Naive thymus-derived CD4-positive, alpha-beta T cell (primary cell): ENCODE measurements at regions of chr3 and their contacts with region 1.

Region 1: DNA sequence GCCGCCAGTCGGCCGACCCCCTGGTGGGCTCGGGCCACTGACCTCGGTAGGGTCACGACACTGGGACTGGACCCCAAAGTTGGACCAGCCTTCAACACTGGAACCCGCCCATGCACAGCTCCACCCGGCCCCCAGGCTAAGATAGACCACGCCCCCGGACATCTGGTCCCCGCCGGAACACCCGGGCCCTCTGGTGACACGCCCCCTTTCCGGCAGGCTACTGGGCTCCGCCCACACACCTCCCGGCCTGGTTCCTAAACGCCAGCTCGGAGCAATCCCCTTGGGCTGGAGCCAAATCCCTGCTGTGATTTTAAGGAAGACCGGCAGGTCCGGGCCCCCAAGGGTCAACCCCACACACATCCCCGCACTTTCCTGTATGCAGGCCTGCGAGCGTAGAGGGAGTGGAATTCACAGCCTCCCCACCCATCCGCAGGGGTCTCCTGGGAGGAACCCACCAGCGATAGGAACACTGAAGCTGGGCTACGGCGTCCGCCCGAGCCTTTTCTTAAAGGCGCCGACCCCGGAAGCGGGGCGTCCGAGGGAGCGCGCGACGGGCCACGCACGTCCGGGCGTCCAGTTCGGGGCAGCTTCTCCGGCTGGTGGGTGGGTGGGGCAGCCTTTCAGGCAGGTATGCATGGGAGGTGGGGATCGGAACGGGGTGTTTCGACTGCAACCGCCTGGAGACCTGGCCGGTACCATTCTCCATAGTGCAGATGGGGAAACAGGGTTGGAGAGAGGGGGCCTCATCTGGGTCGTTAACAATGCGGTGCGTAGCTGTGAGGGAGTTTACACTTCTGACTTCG is at the start of gene HEMK1:
- DNase-seq: peak; percentile 71 to 95 (median 90)
- ATAC-seq: peak; percentile 81
- H3K4me3 ChIP-seq: peak within 1 kb of the TSS; percentile 97
- H3K4me3 Mint-ChIP-seq: peak within 1 kb of the TSS; percentile 86 to 99 (median 96)
- H3K27ac ChIP-seq: peak within 1 kb of the TSS; percentile 84
- H3K27ac Mint-ChIP-seq: peak within 1 kb of the TSS; percentile 90 to 98 (median 93)
- H3K4me1 ChIP-seq: peaks cover 49 to 57% of the 10 kb centered on the region in 2 donors
- H3K4me1 Mint-ChIP-seq: peaks cover 37 to 75% (median 71%) of the 10 kb centered on the region in 7 donors
- H3K27me3 ChIP-seq: no peaks in the 10 kb centered on the region
- H3K27me3 Mint-ChIP-seq: no peaks in the 10 kb centered on the region
- total RNA-seq, gene HEMK1: 32.1 to 71.1 (median 66.1) TPM

Region 2: GRCh38 chr3:49673715-49674496 is 895.2 kb before region 1 on chr3 and contains the start of gene APEH:
- CTCF ChIA-PET with region 1: no interaction called
- POLR2A ChIA-PET with region 1: no interaction called
- intact Hi-C with region 1: loop called in 1 of 2 experiments (anchors 10 kb)
- DNase-seq: peak; percentile 94 to 99 (median 98)
- ATAC-seq: peak; percentile 93
- H3K4me3 ChIP-seq: peak within 1 kb of the TSS; percentile 79
- H3K4me3 Mint-ChIP-seq: peak within 1 kb of the TSS; percentile 90 to 97 (median 94)
- H3K27ac ChIP-seq: peak within 1 kb of the TSS; percentile 94
- H3K27ac Mint-ChIP-seq: peak within 1 kb of the TSS; percentile 93 to 99 (median 96)
- H3K4me1 ChIP-seq: peaks cover 16 to 31% of the 10 kb centered on the region in 2 donors
- H3K4me1 Mint-ChIP-seq: peaks cover 15 to 57% (median 38%) of the 10 kb centered on the region in 7 donors
- H3K27me3 ChIP-seq: no peaks in the 10 kb centered on the region
- H3K27me3 Mint-ChIP-seq: no peaks in the 10 kb centered on the region
- total RNA-seq, gene APEH: 75.5 to 151 (median 99.1) TPM

Region 3: GRCh38 chr3:50298836-50299637 is 270.1 kb before region 1 on chr3 and contains the starts of genes HYAL3 and NAA80:
- CTCF ChIA-PET with region 1: no interaction called
- POLR2A ChIA-PET with region 1: interaction called, 3 read pairs
- intact Hi-C with region 1: loop called (anchors 1 kb)
- DNase-seq: peak; percentile 94 to 100 (median 99)
- ATAC-seq: peak; percentile 93
- H3K4me3 ChIP-seq: peak within 1 kb of the TSS; percentile 97
- H3K4me3 Mint-ChIP-seq: peak within 1 kb of the TSS; percentile 84 to 99 (median 97)
- H3K27ac ChIP-seq: peak within 1 kb of the TSS; percentile 86
- H3K27ac Mint-ChIP-seq: peak within 1 kb of the TSS; percentile 90 to 100 (median 99)
- H3K4me1 ChIP-seq: peaks cover 19 to 20% of the 10 kb centered on the region in 2 donors
- H3K4me1 Mint-ChIP-seq: peaks cover 12 to 36% (median 22%) of the 10 kb centered on the region in 7 donors
- H3K27me3 ChIP-seq: no peaks in the 10 kb centered on the region
- H3K27me3 Mint-ChIP-seq: no peaks in the 10 kb centered on the region
- total RNA-seq, gene HYAL3: 3.4 to 10.7 (median 4.2) TPM
- total RNA-seq, gene NAA80: 30.2 to 44.9 (median 33.6) TPM

Region 4: GRCh38 chr3:50365080-50365841 is 203.9 kb before region 1 on chr3:
- CTCF ChIA-PET with region 1: no interaction called
- POLR2A ChIA-PET with region 1: interaction called, 7 read pairs
- intact Hi-C with region 1: loop called (anchors 1 kb)
- DNase-seq: peak; percentile 82 to 96 (median 94)
- ATAC-seq: peak; percentile 97
- H3K4me3 ChIP-seq: peak overlapping the region; percentile 99
- H3K4me3 Mint-ChIP-seq: peak overlapping the region; percentile 82 to 93 (median 90)
- H3K27ac ChIP-seq: peak overlapping the region; percentile 95
- H3K27ac Mint-ChIP-seq: peak overlapping the region; percentile 87 to 97 (median 94)
- H3K4me1 ChIP-seq: peaks cover 13 to 18% of the 10 kb centered on the region in 2 donors
- H3K4me1 Mint-ChIP-seq: peaks cover 8 to 36% (median 20%) of the 10 kb centered on the region in 7 donors
- H3K27me3 ChIP-seq: no peaks in the 10 kb centered on the region
- H3K27me3 Mint-ChIP-seq: no peaks in the 10 kb centered on the region

Region 5: DNA sequence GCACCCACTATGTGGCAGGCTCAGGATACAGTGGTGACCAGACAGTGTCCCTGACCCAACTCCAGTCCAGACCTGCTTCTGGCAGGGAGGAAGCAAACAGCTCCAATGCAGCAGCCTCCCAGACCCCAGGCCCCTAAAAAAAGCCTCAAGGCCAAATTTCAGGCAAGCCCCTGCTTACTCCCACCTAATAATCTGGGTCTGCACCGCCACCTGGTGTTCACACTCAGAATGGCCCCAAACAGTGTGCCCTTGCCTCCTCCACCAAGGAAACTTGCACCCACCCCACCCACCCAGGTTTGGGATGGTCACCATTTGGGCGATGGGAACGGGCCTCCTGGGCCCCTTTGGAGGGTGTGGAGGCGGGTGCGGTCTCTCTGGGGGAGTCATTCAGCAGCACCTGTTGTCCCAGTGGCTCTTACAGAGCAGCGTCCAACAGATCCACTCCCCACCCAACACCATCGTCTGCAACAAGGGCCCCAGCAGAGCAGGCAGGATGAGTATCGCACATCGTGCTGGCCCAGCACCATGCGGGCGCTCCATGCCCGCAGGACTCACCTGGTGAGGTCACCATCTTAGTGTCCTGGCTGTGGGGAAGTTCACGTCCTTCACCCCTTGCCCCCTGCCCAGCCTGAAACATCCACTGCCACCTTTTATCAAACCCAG is 18.9 kb before region 1 on chr3:
- CTCF ChIA-PET with region 1: interaction called, 3 read pairs
- POLR2A ChIA-PET with region 1: interaction called, 6 read pairs
- intact Hi-C with region 1: loop called in 1 of 2 experiments (anchors 2 kb)
- DNase-seq: peak; percentile 25 to 63 (median 45)
- ATAC-seq: peak; percentile 73
- H3K4me3 ChIP-seq: no peak overlapping the region
- H3K4me3 Mint-ChIP-seq: no peak overlapping the region
- H3K27ac ChIP-seq: no peak overlapping the region
- H3K27ac Mint-ChIP-seq: peak overlapping the region in 1 of 9 donors; percentile 28
- H3K4me1 ChIP-seq: no peaks in the 10 kb centered on the region
- H3K4me1 Mint-ChIP-seq: peaks cover 0 to 10% (median 0%) of the 10 kb centered on the region in 7 donors
- H3K27me3 ChIP-seq: no peaks in the 10 kb centered on the region
- H3K27me3 Mint-ChIP-seq: peaks cover 0 to under 1% (median 0%) of the 10 kb centered on the region in 5 donors

Region 6: DNA sequence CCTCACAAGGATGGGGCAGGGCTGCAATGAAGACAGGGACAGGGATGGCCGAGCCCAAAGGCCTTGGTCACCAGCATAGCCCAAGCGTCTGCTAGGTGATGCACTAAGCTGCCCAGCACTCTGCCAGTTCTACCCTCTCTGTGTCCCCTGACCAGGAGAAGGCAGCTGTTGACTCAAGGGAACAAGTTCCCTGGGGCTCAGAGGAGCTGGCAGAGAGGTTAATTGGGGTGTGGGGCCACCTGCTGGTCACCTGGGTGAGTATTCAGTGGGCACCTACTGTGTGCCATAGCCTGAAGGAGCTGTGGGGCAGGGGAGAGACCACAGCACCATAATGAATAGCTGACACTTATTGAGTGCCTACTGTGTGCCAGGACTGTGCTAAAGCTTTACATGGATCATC is 83.6 kb after region 1 on chr3:
- CTCF ChIA-PET with region 1: interaction called, 13 read pairs
- POLR2A ChIA-PET with region 1: interaction called, 6 read pairs
- intact Hi-C with region 1: loop called (anchors 1 kb)
- DNase-seq: peak; percentile 15 to 58 (median 39)
- ATAC-seq: peak; percentile 55
- H3K4me3 ChIP-seq: no peak overlapping the region
- H3K4me3 Mint-ChIP-seq: no peak overlapping the region
- H3K27ac ChIP-seq: no peak overlapping the region
- H3K27ac Mint-ChIP-seq: peak overlapping the region in 7 of 9 donors; percentile 7 to 70 (median 54)
- H3K4me1 ChIP-seq: no peaks in the 10 kb centered on the region
- H3K4me1 Mint-ChIP-seq: peaks cover 5 to 35% (median 8%) of the 10 kb centered on the region in 7 donors
- H3K27me3 ChIP-seq: no peaks in the 10 kb centered on the region
- H3K27me3 Mint-ChIP-seq: no peaks in the 10 kb centered on the region

Region 7: DNA sequence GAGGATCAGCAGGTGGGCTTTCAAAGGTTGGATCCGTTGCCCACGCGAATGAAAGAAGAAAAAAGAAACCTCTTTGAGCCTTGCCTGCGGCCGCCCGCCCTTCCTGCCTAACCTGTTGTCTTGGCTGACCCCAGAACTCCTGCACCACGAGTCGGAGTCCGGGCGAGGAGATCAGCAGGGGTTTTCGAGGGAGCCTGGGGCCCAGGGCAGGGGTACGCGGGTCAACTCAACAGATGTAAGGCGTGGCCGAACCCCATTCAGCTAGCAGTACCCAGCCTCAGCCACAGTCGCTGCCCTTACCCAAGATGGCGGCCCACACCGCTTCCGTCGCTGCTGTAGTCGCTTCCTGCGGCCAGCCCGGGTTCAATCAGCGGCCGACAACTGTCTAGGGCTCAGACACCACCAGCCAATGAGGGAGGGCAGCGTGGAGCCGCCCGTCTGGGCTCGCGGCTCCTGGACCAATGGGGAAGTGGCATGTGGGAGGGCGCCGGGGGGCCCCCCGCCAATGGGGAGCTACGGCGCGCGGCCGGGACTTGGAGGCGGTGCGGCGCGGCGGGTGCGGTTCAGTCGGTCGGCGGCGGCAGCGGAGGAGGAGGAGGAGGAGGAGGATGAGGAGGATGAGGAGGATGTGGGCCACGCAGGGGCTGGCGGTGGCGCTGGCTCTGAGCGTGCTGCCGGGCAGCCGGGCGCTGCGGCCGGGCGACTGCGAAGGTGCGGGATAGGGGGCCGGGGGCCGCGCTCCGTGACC is 815.8 kb after region 1 on chr3 and contains the start of gene MANF:
- CTCF ChIA-PET with region 1: interaction called, 3 read pairs
- POLR2A ChIA-PET with region 1: interaction called, 10 read pairs
- intact Hi-C with region 1: loop called (anchors 1 kb)
- DNase-seq: peak; percentile 87 to 98 (median 98)
- ATAC-seq: peak; percentile 97
- H3K4me3 ChIP-seq: peak within 1 kb of the TSS; percentile 92
- H3K4me3 Mint-ChIP-seq: peak within 1 kb of the TSS; percentile 89 to 99 (median 98)
- H3K27ac ChIP-seq: peak within 1 kb of the TSS; percentile 98
- H3K27ac Mint-ChIP-seq: peak within 1 kb of the TSS; percentile 98 to 99 (median 99)
- H3K4me1 ChIP-seq: peaks cover 22 to 31% of the 10 kb centered on the region in 2 donors
- H3K4me1 Mint-ChIP-seq: peaks cover 32 to 48% (median 46%) of the 10 kb centered on the region in 7 donors
- H3K27me3 ChIP-seq: no peaks in the 10 kb centered on the region
- H3K27me3 Mint-ChIP-seq: no peaks in the 10 kb centered on the region
- total RNA-seq, gene MANF: 28.2 to 182 (median 68.0) TPM